Activated CD4-positive, alpha-beta T cell treated with anti-CD3 and anti-CD28 coated beads, Interleukin-2, amount 10 ng/mL, durations not matched to agents 7 days and 5 days (primary cell): ENCODE measurements at regions of chr9 and their contacts with region 1.

Region 1: DNA sequence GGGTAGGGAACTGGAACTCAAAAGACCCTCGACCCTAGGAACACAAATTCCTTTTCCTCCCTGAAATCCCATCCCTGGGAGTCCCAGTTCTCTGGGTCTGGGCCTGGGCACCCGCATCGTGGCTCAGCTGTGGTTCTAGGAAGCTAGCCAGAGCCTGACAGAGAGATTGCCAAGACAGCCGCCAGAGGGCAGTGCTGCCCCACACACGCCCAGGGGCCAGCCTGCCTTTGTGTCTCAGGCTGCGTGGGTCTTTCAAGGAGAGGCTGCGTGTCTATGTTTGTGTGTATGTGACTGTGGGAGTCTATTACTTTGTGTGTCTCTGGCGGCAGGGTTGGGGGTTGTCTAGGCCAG is 32.0 kb upstream of the TTLL11 start:
- DNase-seq: peak; percentile 77
- H3K4me3 Mint-ChIP-seq: no peak overlapping the region
- H3K27ac Mint-ChIP-seq: no peak overlapping the region
- H3K4me1 Mint-ChIP-seq: peaks cover 13% of the 10 kb centered on the region
- H3K27me3 Mint-ChIP-seq: peaks cover 28% of the 10 kb centered on the region

Region 2: DNA sequence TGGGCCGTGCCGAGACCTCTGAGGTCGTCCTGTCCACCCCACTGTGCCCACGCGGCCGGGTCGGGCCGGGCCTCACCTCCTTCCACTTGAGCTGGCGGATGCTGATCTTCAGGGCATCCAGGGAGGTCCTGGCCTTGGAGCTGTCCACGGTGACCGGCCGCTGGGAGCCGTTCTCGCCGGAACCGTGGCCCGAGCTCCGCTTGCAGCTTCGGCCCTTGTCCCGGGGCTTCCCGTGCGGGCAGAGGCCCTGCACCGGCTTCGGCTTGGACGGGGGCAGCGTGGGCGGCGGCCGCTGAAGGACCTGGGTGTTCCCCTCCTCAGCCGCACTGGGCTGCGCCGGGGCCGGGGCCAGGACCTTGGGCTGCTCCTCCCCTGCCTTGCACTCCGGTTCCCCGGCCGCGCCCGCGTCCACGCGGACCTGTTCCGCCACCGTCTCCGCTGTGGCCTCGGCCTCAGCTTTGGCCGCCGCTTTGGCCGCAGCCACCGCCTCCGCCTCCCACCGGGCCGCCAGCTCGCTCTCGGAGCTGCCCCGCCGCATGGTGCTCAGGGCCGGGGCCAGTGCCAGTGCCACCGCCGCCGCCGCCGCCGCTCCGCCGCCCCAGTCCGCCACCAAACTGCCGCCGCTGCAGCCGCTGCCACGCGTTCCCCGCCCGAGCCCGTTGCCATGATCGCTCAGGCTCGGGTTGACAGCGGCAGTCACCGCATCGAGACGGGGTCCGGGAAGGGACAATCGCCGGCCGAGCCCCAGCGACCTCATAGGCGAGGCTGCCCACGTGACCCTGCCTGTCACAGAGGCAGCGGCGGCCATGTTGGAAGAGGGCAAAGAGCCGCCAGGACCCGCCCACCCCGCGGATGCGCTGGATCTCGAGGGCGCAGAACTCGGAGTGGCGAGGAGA is 32.3 kb before region 1 on chr9 and contains the start of gene TTLL11:
- CTCF ChIA-PET with region 1: interaction called, 40 read pairs
- POLR2A ChIA-PET with region 1: no interaction called
- DNase-seq: peak; percentile 97
- H3K4me3 Mint-ChIP-seq: peak within 1 kb of the TSS; percentile 84
- H3K27ac Mint-ChIP-seq: peak within 1 kb of the TSS; percentile 81
- H3K4me1 Mint-ChIP-seq: peaks cover 38% of the 10 kb centered on the region
- H3K27me3 Mint-ChIP-seq: peaks cover 17% of the 10 kb centered on the region
- total RNA-seq, gene TTLL11: 2.6 to 3.1 TPM

Region 3: DNA sequence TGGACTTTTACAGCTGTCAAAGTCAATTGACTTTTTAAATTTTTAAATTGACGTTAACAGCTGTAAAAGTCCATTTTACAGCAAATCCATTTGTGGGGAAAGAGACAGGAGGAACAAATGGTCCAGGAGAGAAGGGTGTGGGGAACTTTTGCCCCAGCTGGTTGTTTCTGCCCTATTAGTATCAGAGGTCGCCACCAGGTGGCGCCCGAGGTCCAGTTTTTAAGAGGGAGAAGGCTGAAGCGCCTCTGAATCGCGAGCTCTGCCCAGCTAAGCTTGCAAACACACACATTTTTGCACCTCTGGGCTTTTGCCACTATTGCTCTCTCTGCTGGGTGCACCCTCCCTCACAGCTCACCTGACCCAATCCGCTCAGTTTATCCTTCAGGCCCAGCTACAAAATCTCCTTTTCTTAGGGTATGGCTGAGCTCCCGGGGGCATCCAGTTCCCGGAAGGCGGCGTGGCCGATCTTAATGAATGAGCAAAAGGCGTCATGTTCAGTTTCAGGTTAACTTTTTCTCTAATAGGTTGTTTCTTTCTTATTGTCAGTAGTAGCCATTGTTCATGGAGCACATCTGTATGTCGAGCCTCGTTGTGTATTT is 25.8 kb before region 1 on chr9:
- CTCF ChIA-PET with region 1: interaction called, 40 read pairs
- POLR2A ChIA-PET with region 1: no interaction called
- DNase-seq: peak; percentile 85
- H3K4me3 Mint-ChIP-seq: no peak overlapping the region
- H3K27ac Mint-ChIP-seq: no peak overlapping the region
- H3K4me1 Mint-ChIP-seq: peaks cover 14% of the 10 kb centered on the region
- H3K27me3 Mint-ChIP-seq: peaks cover 19% of the 10 kb centered on the region

Region 4: DNA sequence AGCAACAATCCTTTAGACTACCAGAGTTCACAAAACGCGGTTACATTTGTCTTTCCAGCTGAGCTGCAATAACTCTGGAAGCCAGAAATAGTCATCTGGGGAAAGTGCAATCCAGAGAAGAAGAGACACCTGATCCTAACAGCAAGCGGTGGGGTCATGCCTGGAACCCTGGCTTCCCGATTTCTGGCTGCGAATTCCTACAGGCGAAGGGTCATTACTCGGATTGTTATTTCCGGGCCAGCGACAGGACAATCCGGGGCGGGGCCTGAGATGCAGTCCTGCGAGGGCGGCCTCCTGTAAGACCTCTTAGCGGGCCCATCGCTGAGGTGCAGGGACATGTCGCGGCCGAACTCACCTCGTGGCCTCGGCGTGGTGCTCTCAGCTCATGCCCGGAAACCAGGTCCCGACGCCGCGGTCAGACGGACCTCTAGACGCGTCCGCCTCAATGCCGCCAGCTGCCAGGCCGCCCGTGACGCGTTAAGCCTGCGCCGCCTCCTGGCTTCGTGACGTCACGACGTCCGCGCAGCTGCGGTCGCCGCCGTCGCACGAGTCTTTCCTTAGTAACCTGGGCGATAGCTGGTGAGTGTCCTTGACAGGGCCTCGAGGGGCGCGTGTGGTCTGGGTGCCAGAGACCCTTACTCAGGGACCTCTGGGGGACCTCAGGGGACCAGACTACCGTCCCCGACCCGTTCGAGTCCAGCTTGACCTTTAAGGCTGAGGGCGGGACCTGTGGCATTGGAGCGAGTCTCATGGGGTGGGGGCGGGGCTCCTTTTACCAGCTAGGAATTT is 139.4 kb after region 1 on chr9 and contains the starts of genes MRRF and RBM18:
- CTCF ChIA-PET with region 1: no interaction called
- POLR2A ChIA-PET with region 1: no interaction called
- DNase-seq: peak; percentile 89
- H3K4me3 Mint-ChIP-seq: peak within 1 kb of the TSS; percentile 89
- H3K27ac Mint-ChIP-seq: peak within 1 kb of the TSS; percentile 100
- H3K4me1 Mint-ChIP-seq: peaks cover 54% of the 10 kb centered on the region
- H3K27me3 Mint-ChIP-seq: no peaks in the 10 kb centered on the region
- total RNA-seq, gene MRRF: 34.1 to 35.4 TPM
- total RNA-seq, gene RBM18: 21.5 to 23.6 TPM

Region 5: DNA sequence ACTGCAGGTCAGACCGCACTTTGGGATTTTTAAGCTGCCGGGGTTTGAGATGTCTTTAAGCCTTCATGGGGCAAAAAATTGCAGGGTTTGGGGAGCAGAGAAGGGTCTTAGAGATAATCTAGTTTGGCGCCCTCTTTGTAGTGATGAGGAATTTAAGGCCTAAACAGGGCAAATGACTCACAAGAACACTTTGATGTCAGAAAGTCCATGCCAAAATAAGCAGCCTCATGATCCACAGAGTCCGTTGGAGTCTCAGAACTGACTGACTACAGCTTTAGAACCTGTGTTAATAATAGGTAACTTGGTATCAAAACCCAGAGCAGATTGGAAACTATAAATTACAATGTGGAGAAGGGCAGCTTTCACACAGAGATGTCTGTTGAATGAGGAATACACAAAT is 209.8 kb after region 1 on chr9:
- CTCF ChIA-PET with region 1: no interaction called
- POLR2A ChIA-PET with region 1: no interaction called
- DNase-seq: no peak
- H3K4me3 Mint-ChIP-seq: no peak overlapping the region
- H3K27ac Mint-ChIP-seq: no peak overlapping the region
- H3K4me1 Mint-ChIP-seq: no peaks in the 10 kb centered on the region
- H3K27me3 Mint-ChIP-seq: peaks cover 1% of the 10 kb centered on the region

Region 6: DNA sequence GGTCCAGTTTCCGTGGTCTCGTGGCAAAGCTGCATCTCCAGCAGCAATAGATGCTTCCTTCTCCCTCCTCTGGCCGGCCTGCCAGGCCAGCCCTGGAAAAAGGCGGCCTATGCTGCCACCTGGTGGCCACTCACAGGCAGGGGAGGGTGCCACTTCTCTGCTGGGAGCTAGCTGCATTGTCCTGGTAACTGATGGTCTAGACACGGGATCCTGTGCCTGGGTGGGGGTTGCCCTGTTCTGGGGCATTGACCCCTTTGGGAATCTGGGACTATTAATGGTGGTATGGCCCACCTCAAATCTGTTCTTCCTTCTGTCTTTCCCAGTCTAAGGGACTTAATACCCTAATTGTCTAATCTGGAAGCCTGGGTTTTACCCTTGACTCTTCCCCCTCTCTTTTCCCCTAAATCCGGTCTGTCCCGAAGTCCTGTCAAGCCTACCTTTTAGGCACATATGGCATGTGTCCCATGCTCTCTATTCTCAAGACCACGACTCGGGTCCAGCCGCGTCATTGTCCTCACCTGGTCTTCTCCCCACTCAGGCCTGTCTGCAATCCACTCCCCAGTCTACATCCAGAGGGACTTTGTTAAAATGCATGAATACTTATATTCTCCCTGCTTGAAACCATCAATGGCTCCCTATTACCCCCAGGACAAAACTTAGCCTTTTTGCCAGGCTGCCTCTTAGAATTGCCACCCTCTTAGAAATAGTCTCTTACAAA is 225.7 kb after region 1 on chr9:
- CTCF ChIA-PET with region 1: interaction called, 60 read pairs
- POLR2A ChIA-PET with region 1: no interaction called
- DNase-seq: peak; percentile 79
- H3K4me3 Mint-ChIP-seq: no peak overlapping the region
- H3K27ac Mint-ChIP-seq: no peak overlapping the region
- H3K4me1 Mint-ChIP-seq: peaks cover 18% of the 10 kb centered on the region
- H3K27me3 Mint-ChIP-seq: peaks cover 26% of the 10 kb centered on the region